ENCODE measurements at regions of chr15 and their contacts with region 1.

Region 1: GRCh38 chr15:69394556-69395282 is 19.4 kb upstream of the KIF23 start:
- DNase-seq: peak; percentile 71
- H3K4me3 ChIP-seq: no peak overlapping the region
- H3K27ac ChIP-seq: no peak overlapping the region
- H3K4me1 ChIP-seq: peaks cover 7% of the 10 kb centered on the region
- H3K27me3 ChIP-seq: no peaks in the 10 kb centered on the region
- CTCF ChIP-seq: peak; percentile 91 to 97
- POLR2A ChIP-seq: no peak

Region 2: GRCh38 chr15:68924866-68925560 is 469.7 kb before region 1 on chr15:
- CTCF ChIA-PET with region 1: interaction called, 11 read pairs
- POLR2A ChIA-PET with region 1: no interaction called
- dilution Hi-C with region 1: no loop called
- intact Hi-C with region 1: no loop called
- DNase-seq: peak; percentile 75
- H3K4me3 ChIP-seq: no peak overlapping the region
- H3K27ac ChIP-seq: no peak overlapping the region
- H3K4me1 ChIP-seq: no peaks in the 10 kb centered on the region
- H3K27me3 ChIP-seq: peaks cover 5 to 37% of the 10 kb centered on the region in 2 experiments
- CTCF ChIP-seq: peak; percentile 72 to 78
- POLR2A ChIP-seq: no peak

Region 3: DNA sequence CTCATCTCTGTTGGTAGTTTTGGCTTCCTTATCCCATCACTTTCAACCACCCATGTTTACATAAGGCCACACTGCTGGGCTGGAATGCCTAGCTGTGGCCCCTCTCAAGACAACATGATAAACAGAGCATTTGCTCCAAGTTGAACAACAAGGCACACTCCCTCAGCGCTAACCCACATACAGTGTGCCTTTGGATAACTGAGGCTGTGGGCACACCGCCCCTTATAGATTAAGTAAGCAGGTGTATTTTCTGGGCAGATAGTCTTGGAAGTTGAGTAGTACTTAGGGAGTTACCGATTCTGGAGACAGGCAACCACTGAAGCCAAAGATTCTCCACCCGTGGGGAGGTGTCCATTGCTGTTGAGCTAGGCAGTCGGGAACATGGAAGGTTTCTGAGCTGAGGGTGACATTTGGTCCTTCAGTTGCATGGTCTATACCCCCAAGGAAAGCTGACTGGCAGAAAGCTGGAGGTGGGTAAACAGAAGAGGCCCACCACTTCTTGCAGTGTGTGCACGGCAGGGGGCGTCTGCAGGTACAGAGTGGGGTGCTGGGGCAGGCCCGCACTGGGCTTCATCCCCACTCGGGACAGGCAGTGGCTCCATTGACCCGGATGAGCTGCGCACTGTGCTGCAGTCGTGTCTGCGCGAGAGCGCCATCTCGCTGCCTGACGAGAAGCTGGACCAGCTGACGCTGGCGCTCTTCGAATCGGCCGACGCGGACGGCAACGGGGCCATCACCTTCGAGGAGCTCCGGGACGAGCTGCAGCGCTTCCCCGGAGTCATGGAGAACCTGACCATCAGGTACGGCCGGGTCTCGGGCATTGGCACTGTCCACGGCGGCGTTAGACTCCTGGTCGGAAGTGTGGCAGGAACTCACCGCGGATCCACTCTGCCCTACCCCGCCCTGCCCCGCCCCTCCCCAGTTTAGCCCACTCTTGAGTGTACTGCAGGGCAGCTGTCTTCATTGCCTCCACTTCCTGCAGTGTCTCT is 363.4 kb before region 1 on chr15:
- CTCF ChIA-PET with region 1: interaction called, 25 read pairs
- POLR2A ChIA-PET with region 1: no interaction called
- dilution Hi-C with region 1: no loop called
- intact Hi-C with region 1: no loop called
- DNase-seq: peak; percentile 35
- H3K4me3 ChIP-seq: peak overlapping the region in 2 of 3 experiments; percentile 9 to 24
- H3K27ac ChIP-seq: no peak overlapping the region
- H3K4me1 ChIP-seq: no peaks in the 10 kb centered on the region
- H3K27me3 ChIP-seq: peaks cover 0 to 2% of the 10 kb centered on the region in 2 experiments
- CTCF ChIP-seq: peak; percentile 56 to 70
- POLR2A ChIP-seq: no peak

Region 4: DNA sequence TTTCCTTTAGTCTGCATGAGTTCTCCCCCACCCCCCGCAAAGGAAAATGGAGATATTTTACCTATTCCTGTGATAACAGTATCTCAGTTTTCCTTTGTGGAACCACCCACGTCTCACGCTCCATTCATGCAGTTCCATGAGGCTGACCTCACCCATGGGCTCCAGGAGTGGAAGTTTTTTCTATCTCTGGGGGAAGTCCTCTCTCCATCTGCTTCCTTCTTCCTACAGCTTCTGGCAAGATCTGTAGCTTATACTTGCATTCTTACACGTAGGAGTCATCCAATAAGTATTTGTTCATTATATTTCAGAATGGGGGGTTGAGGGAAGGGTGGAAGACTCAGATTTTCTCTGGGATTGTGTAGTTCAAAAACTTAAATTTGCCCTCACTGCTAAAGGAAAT is 240.0 kb before region 1 on chr15:
- CTCF ChIA-PET with region 1: no interaction called
- POLR2A ChIA-PET with region 1: no interaction called
- dilution Hi-C with region 1: no loop called
- intact Hi-C with region 1: loop called (anchors 2 kb)
- DNase-seq: peak; percentile 96
- H3K4me3 ChIP-seq: no peak overlapping the region
- H3K27ac ChIP-seq: peak overlapping the region; percentile 82
- H3K4me1 ChIP-seq: peaks cover 28% of the 10 kb centered on the region
- H3K27me3 ChIP-seq: no peaks in the 10 kb centered on the region
- CTCF ChIP-seq: no peak
- POLR2A ChIP-seq: peak; percentile 64

Region 5: DNA sequence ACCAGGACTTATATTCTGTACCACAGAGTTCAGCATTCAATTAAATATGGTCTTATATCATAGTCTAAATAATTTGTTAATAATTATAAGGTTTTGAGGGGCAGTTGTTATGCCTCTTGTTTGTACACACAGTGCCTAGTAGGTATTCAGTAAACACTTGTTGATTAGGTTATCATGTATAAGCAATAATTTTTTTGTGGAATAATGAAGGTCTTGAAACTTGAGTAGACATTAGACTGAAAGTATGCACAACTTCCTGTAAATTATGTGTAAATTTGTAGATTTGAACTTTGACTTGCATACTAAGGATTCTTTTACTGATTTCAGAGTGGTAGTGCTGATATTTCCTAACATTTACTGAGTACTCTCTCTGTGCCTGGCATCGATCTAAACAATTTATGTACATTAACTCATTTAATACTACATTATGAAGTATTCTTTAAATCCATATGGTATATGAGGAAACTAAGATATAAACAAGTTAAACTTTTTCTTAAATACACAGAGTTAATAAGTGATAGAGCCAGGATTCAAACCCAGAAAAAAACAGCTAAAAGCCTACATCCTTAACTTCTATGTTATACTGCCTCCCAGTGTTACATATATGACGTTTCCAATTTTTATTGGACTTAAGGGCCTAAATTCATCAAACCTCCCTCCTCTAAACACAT is 169.2 kb before region 1 on chr15:
- CTCF ChIA-PET with region 1: interaction called, 17 read pairs
- POLR2A ChIA-PET with region 1: no interaction called
- dilution Hi-C with region 1: no loop called
- intact Hi-C with region 1: loop called (anchors 1 kb)
- DNase-seq: peak; percentile 62
- H3K4me3 ChIP-seq: no peak overlapping the region
- H3K27ac ChIP-seq: no peak overlapping the region
- H3K4me1 ChIP-seq: peaks cover 2% of the 10 kb centered on the region
- H3K27me3 ChIP-seq: no peaks in the 10 kb centered on the region
- CTCF ChIP-seq: peak; percentile 5 to 18
- POLR2A ChIP-seq: no peak

Region 6: DNA sequence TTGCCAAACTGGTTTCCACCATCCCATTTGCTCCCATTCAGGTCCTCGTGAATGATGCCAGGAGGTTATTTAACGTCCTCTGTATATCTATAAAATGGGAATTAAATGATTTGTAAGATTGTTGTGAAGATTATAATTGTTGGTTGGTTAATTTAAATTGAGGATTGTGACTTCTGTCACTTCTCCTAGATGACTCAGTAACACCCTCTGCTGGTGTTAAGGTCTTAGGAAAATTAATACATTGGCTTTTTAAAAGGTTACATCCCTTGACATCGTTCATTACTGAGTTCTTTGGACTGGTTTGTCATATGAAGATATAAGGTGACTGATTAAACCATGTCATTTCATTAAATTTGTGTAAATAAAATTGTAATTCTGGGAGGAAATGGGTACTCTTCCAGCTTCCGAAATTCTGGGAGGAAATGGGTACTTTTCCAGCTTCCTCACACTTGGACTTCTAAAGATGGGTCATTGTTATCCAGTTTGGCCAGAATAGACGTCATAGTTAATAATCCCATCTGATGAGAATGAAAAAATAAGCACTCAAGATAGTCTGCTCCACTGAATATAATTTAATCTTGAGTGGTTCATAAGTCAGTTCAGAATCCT is 129.3 kb before region 1 on chr15:
- CTCF ChIA-PET with region 1: interaction called, 18 read pairs
- POLR2A ChIA-PET with region 1: no interaction called
- dilution Hi-C with region 1: no loop called
- intact Hi-C with region 1: loop called (anchors 1 kb)
- DNase-seq: peak; percentile 46
- H3K4me3 ChIP-seq: no peak overlapping the region
- H3K27ac ChIP-seq: no peak overlapping the region
- H3K4me1 ChIP-seq: no peaks in the 10 kb centered on the region
- H3K27me3 ChIP-seq: no peaks in the 10 kb centered on the region
- CTCF ChIP-seq: peak; percentile 22 to 33
- POLR2A ChIP-seq: no peak

Region 7: GRCh38 chr15:69380100-69380727 is 14.5 kb before region 1 on chr15:
- CTCF ChIA-PET with region 1: interaction called, 18 read pairs
- POLR2A ChIA-PET with region 1: no interaction called
- dilution Hi-C with region 1: no loop called
- intact Hi-C with region 1: no loop called
- DNase-seq: no peak
- H3K4me3 ChIP-seq: no peak overlapping the region
- H3K27ac ChIP-seq: no peak overlapping the region
- H3K4me1 ChIP-seq: no peaks in the 10 kb centered on the region
- H3K27me3 ChIP-seq: peaks cover 0 to 3% of the 10 kb centered on the region in 2 experiments
- CTCF ChIP-seq: peak in 1 of 2 donors; percentile 9
- POLR2A ChIP-seq: no peak

Region 8: DNA sequence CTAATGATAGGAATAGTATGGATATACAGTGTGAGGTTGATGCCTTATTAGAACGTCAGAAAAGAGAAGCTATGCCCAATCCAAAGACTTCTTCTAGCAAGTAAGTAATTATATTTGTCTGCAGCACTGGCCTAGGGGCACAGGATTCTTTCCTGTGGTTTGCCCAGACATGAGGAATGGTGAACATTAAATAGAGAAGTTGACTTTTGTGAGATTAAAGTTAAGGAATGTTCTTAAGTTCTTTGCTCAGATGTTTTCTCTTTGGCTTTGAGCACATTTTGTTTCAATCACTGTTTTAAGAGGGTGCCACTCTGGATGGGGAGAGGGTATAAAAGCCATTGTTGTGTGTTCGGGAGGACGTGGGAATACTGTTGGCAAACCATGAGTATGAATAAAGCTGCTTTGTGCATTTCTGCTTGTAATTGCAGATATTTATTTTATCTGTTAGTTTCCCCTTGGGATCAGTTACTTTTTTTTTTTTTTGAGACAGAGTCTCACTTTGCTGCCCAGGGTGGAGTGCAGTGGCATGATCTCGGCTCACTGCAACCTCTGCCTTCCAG is 27.7 kb after region 1 on chr15:
- CTCF ChIA-PET with region 1: no interaction called
- POLR2A ChIA-PET with region 1: no interaction called
- dilution Hi-C with region 1: no loop called
- intact Hi-C with region 1: no loop called
- DNase-seq: no peak
- H3K4me3 ChIP-seq: no peak overlapping the region
- H3K27ac ChIP-seq: no peak overlapping the region
- H3K4me1 ChIP-seq: no peaks in the 10 kb centered on the region
- H3K27me3 ChIP-seq: no peaks in the 10 kb centered on the region
- CTCF ChIP-seq: no peak
- POLR2A ChIP-seq: no peak

Measured in endothelial cell of umbilical vein (primary cell).